ENCODE measurements at regions of chr11 and their contacts with region 1.

Region 1: DNA sequence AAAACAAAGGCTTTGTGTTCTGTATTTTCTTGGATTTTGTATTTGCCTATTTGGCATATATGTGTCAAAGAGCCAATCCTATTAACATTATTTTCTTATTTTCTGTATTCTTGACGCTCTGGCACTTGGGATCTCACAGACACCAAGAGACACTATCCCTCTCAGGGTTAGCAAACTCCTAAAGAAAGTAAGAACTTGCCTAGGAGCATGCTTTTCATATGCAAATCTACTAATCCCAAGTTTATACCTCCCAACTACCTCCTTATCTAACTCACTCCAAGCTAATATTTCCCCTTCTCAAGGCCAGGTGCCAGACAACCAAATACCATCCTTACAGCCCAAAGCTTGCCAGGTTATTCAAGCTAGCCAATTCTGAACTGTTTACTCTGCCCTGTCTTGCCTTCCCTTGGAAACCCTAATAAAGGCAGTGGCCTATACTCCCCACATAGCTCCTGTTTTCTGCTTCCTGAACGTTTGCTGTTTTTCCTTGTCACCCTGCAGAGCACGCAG is 455.4 kb upstream of the ANO3 start:
- DNase-seq: no peak
- H3K4me3 ChIP-seq: no peak overlapping the region
- H3K27ac ChIP-seq: no peak overlapping the region
- H3K4me1 ChIP-seq: no peaks in the 10 kb centered on the region
- H3K27me3 ChIP-seq: no peaks in the 10 kb centered on the region

Region 2: DNA sequence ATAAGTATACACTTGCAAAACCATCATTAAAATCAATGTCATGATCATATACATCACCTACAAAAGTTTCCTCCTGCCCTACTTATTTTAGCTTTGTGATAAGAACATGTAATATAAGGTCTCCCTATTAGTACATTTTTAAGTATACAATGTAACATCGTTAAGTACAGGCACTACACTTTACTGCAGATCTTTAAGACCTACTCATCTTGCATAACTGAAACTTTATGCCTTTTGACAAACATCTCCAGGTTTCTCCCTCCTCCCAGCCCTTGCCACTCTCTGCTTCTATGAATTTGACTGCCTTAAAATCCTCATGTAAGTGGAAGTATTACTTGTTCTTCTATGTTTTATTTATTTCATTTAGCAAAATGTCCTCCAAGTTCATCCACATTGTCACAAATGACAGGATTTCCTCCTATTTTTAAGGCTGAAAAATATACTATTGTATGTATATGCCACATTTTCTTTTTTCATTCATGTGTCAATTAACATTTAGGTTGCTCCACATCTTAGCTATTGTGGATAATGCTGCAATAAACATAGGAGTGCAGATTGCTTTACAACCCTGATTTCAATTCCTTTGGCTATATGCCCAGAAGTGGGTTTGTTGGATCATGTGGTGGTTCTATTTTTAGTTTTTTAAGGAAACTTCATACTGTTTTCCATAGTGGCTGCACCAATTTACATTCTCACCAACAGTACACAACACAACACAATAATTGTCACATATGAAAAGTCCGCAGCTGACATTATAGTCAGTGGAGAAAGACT is 15.6 kb before region 1 on chr11:
- CTCF ChIA-PET with region 1: no interaction called
- POLR2A ChIA-PET with region 1: no interaction called
- DNase-seq: no peak
- H3K4me3 ChIP-seq: no peak overlapping the region
- H3K27ac ChIP-seq: no peak overlapping the region
- H3K4me1 ChIP-seq: no peaks in the 10 kb centered on the region
- H3K27me3 ChIP-seq: no peaks in the 10 kb centered on the region

Region 3: DNA sequence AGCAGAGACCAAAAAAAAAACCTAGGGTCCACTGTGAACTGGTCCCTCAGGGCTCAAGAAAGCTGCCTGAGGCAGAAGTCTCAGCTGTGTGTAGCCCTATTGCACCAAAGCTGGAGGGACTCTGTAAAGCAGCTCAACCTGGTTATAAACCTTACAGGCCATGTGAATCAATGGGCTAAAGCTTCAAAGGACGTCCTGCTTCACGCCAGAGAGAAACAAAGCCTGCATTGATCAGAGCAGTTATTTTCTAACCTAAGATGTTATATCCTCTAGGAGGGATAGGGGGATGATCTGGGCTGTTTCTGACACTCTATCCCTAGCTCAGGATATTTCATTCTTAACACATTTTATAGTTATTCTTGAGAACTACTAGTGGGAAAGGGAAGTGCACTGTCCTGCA is 23.2 kb after region 1 on chr11:
- CTCF ChIA-PET with region 1: no interaction called
- POLR2A ChIA-PET with region 1: no interaction called
- DNase-seq: no peak
- H3K4me3 ChIP-seq: no peak overlapping the region
- H3K27ac ChIP-seq: no peak overlapping the region
- H3K4me1 ChIP-seq: no peaks in the 10 kb centered on the region
- H3K27me3 ChIP-seq: no peaks in the 10 kb centered on the region

Region 4: DNA sequence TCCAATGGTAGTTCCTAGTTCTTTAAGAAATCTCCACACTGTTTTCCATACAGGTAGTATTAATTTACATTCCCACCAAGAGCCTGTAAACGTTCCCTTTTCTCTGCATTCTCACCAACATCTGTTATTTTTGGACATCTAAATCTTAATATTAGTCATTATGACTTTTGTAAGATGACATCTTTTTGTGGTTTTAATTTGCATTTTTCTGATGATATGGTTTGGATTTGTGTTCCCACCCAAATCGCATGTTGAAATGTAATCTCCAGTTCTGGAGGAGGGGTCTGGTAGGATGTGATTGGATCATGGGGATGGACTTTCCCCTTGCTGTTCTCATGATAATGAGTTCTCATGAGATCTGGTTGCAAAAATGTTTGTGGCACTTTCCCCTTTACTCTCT is 606.6 kb after region 1 on chr11:
- CTCF ChIA-PET with region 1: no interaction called
- POLR2A ChIA-PET with region 1: interaction called, 11 read pairs
- DNase-seq: no peak
- H3K4me3 ChIP-seq: no peak overlapping the region
- H3K27ac ChIP-seq: no peak overlapping the region
- H3K4me1 ChIP-seq: no peaks in the 10 kb centered on the region
- H3K27me3 ChIP-seq: no peaks in the 10 kb centered on the region